ENCODE measurements at regions of chr16 and their contacts with region 1.

Region 1: GRCh38 chr16:84765616-84766580 is 53.9 kb upstream of the CRISPLD2 start:
- DNase-seq: no peak
- H3K4me3 ChIP-seq: no peak overlapping the region
- H3K27ac ChIP-seq: peak overlapping the region; percentile 87
- H3K27me3 ChIP-seq: no peaks in the 10 kb centered on the region
- CTCF ChIP-seq: no peak

Region 2: DNA sequence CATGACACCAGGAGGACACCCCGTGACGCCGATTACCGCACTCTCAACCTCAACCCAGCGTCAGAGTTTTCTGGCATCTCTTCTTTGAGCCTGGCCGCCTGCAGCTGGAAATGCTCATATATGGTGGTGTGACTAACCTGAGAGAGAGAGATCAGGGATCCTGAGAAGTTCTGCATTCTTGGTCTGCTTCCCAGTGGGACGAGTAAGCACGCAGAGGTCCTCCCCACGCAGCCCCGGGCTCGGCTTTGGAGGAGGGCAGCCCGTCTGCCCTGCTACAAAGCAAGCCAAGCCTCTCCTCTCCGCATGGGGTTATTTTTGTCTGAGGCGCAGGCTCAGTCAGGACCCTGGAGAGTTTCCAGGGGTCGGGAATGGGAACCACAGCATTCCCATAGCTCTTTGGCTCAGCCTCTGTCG is 70.3 kb after region 1 on chr16:
- CTCF ChIA-PET with region 1: interaction called, 3 read pairs
- POLR2A ChIA-PET with region 1: interaction called, 18 read pairs
- DNase-seq: peak; percentile 100
- H3K4me3 ChIP-seq: no peak overlapping the region
- H3K27ac ChIP-seq: peak overlapping the region; percentile 96
- H3K27me3 ChIP-seq: no peaks in the 10 kb centered on the region
- CTCF ChIP-seq: no peak